Activated CD8-positive, alpha-beta T cell treated with anti-CD3 and anti-CD28 coated beads for 36 hours (primary cell): ENCODE measurements at regions of chr9 and their contacts with region 1.

Region 1: DNA sequence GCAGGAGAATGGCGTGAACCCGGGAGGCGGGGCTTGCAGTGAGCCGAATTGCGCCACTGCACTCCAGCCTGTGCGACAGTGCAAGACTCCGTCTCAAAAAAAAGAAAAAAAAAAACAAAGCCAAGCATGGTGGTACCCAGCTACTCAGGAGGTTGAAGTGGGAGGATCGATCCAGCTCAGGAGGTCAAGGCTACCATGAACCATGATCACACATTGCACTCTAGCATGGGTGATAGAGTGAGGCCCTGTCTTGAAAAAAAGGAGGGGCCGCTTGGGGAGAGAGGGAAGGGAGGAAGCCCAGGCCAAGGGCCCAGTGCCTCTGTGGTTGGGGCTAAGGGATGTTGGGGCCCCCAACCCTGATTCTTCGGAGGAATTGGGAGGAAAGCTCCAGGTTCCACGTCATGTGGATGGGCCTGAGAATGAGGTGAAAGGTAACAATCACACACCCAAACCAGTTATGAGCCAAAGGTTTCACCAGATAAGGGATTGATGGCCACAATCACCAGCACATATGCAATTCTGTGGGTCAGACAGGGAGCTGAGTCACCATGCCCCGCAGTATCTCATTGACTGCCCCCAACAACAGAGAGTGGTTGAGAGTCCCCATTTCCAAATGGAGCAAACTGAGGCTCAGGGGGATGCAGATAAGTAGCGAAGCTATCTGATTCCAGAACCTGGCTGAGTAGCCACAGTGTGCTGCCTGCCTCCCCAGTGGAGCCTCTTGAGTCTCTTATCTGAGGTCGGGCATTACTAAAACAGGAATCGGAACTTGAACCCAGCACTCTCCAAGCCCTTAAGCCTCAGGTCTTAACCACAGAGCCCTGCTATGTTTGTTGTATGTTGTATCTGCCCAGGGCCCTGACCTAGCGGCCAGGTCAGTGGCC is 20.5 kb downstream of the SWI5 start:
- DNase-seq: no peak
- ATAC-seq: no peak
- H3K4me3 Mint-ChIP-seq: no peak overlapping the region
- H3K27ac Mint-ChIP-seq: no peak overlapping the region
- H3K4me1 Mint-ChIP-seq: peaks cover 4% of the 10 kb centered on the region
- H3K27me3 Mint-ChIP-seq: no peaks in the 10 kb centered on the region
- CTCF ChIP-seq: no peak

Region 2: GRCh38 chr9:128310461-128310860 is 13.9 kb after region 1 on chr9:
- CTCF ChIA-PET with region 1: interaction called, 21 read pairs
- POLR2A ChIA-PET with region 1: interaction called, 4 read pairs
- intact Hi-C with region 1: no loop called
- DNase-seq: no peak
- ATAC-seq: no peak
- H3K4me3 Mint-ChIP-seq: no peak overlapping the region
- H3K27ac Mint-ChIP-seq: no peak overlapping the region
- H3K4me1 Mint-ChIP-seq: no peaks in the 10 kb centered on the region
- H3K27me3 Mint-ChIP-seq: no peaks in the 10 kb centered on the region
- CTCF ChIP-seq: no peak

Region 3: DNA sequence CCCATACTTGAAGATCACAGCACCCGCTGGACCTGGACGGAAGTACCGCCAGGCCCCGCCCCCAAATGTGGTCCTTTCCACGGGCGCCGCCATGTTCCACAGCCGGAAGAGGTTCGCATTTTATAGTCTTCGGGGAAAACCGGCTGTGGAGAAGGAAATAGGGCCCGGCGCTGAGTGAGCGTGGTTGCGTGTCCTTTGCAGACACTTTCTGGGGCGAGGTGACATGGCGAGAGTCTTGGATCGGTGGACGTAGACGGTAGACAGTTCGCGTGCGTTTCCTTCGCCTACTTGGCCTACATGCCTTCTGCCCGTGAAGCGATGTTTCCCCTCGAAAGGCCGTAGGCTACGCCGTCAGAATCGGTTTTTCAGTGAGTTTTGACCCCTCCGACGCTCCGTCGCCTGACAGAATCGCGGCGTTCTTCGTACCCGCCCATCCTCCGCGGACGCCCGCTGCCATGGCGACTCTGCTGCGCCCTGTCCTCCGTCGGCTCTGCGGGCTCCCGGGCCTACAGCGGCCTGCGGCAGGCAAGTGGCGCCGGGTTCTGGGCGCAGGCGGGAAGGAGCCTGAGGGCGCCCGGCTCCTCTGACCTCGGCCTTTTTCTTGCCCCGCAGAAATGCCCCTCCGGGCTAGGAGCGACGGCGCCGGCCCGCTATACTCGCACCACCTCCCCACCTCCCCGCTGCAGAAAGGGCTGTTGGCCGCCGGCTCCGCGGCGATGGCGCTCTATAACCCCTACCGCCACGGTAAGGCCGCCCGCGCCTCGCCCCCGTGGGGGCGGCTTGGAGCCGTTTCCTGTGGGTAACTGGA is 26.0 kb after region 1 on chr9 and contains the starts of genes COQ4 and TRUB2:
- CTCF ChIA-PET with region 1: interaction called, 10 read pairs
- POLR2A ChIA-PET with region 1: interaction called, 4 read pairs
- intact Hi-C with region 1: no loop called
- DNase-seq: peak; percentile 96
- ATAC-seq: peak; percentile 87
- H3K4me3 Mint-ChIP-seq: peak within 1 kb of the TSS; percentile 99
- H3K27ac Mint-ChIP-seq: peak within 1 kb of the TSS; percentile 97
- H3K4me1 Mint-ChIP-seq: peaks cover 24% of the 10 kb centered on the region
- H3K27me3 Mint-ChIP-seq: no peaks in the 10 kb centered on the region
- CTCF ChIP-seq: no peak
- total RNA-seq, gene COQ4: 31.9 to 33.5 TPM
- total RNA-seq, gene TRUB2: 29.7 to 30.1 TPM

Region 4: GRCh38 chr9:128339771-128340690 is 43.5 kb after region 1 on chr9 and contains the start of gene SLC27A4:
- CTCF ChIA-PET with region 1: interaction called, 20 read pairs
- POLR2A ChIA-PET with region 1: interaction called, 3 read pairs
- intact Hi-C with region 1: loop called (anchors 2 kb)
- DNase-seq: peak; percentile 77
- ATAC-seq: peak; percentile 90
- H3K4me3 Mint-ChIP-seq: peak within 1 kb of the TSS; percentile 80
- H3K27ac Mint-ChIP-seq: peak within 1 kb of the TSS; percentile 83
- H3K4me1 Mint-ChIP-seq: peaks cover 6% of the 10 kb centered on the region
- H3K27me3 Mint-ChIP-seq: no peaks in the 10 kb centered on the region
- CTCF ChIP-seq: no peak
- total RNA-seq, gene SLC27A4: 10.5 to 11.2 TPM